H1 (cell line): ENCODE measurements at regions of chr10 and their contacts with region 1.

Region 1: DNA sequence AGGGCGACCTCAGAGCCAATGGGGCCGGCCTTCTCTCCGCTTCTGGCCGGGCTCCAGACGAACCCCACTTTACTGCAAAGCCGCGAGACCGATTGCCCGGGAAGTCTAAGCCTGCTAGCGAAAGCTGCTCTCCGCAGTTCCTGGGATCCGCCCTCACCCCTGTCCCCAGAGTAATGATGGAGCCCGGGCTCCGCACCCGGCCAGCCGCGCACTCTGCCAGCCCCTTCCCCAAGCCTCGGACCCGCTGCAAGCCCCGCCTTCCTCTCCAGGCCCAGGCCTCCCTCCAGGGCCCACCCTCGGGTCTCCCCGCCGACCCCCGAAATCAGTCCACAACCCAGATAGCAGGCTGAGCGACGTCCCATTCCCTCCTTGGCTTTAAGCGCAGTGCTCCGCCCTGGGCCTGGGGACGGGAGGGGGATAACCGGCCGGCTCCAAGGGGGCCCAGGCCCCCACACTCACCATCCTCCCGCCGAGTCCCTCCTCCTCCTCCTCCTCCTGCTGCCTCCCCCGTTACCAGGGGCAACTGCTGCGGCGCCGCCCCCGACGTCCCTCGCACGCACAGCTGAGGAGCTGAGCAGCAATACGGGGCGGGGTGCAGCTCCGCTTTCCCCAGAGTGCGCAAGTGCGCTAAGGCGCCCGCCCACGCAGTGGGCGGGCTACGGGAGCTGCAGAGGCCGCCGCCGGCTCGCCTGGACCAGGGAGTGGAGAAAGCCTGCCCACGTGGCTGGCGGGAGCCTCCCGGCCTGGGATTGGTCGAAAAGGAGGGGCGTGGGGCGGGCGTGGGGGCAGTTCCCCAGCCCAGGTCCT is at the start of gene ARL3:
- DNase-seq: peak; percentile 97
- H3K4me3 ChIP-seq: peak within 1 kb of the TSS; percentile 85 to 96 (median 92)
- H3K27ac ChIP-seq: peak within 1 kb of the TSS; percentile 89
- H3K4me1 ChIP-seq: peaks cover 5 to 22% (median 14%) of the 10 kb centered on the region in 4 experiments; a peak in 6 of 7 replicates
- H3K27me3 ChIP-seq: no peaks in the 10 kb centered on the region
- CTCF ChIP-seq: peak in 2 of 3 experiments; percentile 42 to 66; a peak in 3 of 4 replicates
- EP300 ChIP-seq: 0 out of 3 replicates have a peak, but pooled peaks of 1 of the 2 experiments have one; percentile 27
- POLR2A ChIP-seq: peak in 1 of 2 experiments; percentile 77; a peak in 2 of 3 replicates
- RAD21 ChIP-seq: no peak; a peak in 1 of 4 replicates
- total RNA-seq, gene ARL3: 15.3 and 16.2 TPM in 2 replicates

Region 2: GRCh38 chr10:102596506-102596971 is 117.5 kb before region 1 on chr10:
- CTCF ChIA-PET with region 1: no interaction called
- POLR2A ChIA-PET with region 1: no interaction called
- DNase-seq: peak in 1 of 2 experiments; percentile 65
- H3K4me3 ChIP-seq: no peak overlapping the region
- H3K27ac ChIP-seq: no peak overlapping the region
- H3K4me1 ChIP-seq: peaks cover 0 to 2% (median 0%) of the 10 kb centered on the region in 4 experiments; a peak in 3 of 7 replicates
- H3K27me3 ChIP-seq: no peaks in the 10 kb centered on the region; a peak in 1 of 7 replicates
- CTCF ChIP-seq: peak; percentile 81 to 97 (median 87)
- EP300 ChIP-seq: no peak
- POLR2A ChIP-seq: no peak
- RAD21 ChIP-seq: peak; percentile 77 to 85

Region 3: GRCh38 chr10:102641880-102642735 is 71.9 kb before region 1 on chr10:
- CTCF ChIA-PET with region 1: no interaction called
- POLR2A ChIA-PET with region 1: interaction called, 13 read pairs
- DNase-seq: peak; percentile 94
- H3K4me3 ChIP-seq: peak overlapping the region; percentile 40 to 81 (median 63)
- H3K27ac ChIP-seq: peak overlapping the region; percentile 80; the same call in 1 of the 2 replicates
- H3K4me1 ChIP-seq: peaks cover 6 to 16% (median 13%) of the 10 kb centered on the region in 4 experiments
- H3K27me3 ChIP-seq: no peaks in the 10 kb centered on the region
- CTCF ChIP-seq: no peak
- EP300 ChIP-seq: no peak
- POLR2A ChIP-seq: peak in 1 of 2 experiments; percentile 77; a peak in 2 of 3 replicates
- RAD21 ChIP-seq: no peak

Region 4: DNA sequence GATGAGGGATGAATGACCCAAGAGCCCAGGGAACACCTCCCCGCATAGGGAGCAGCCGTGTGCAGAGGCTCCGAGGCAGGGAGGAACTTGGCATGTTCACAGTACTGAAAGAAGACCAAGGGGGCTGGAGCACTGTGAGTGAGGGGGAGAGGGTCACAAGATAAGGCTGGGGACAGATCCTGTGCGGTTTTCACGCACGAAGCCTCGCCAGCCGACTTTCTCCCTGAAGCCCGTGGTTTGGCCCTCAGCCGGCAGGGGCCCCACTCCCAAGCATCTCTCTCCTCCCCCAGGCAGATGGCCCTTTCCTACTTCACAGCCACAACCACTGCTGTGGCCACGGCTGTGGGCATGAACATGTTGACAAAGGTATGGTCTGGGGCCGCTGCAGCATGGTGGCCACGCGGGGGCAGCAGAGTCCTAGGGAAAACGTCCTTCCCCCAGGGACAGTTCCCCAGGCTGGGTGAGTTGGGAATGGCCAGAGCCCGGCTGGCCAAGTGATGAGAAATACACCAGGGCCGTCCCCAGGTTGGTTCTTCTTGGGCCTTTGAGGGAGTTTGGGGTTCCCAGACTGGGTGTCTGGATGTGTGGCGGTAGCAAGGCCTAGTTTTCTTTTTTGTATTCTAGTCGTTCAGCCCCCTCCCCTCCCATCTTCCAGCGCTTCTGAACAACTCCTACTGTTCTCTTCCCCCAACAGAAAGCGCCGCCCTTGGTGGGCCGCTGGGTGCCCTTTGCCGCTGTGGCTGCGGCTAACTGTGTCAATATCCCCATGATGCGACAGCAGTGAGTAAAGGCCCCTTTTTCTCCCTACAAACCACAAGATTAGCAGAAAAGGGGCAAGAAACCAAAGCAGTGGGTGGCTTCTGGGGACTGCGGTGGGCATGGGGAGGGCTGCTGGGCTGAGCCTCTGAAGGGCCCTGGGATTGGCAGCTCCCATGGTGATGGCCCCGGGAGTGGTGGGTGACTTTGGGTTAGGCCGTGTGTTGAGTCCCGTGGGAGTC is 15.3 kb after region 1 on chr10:
- CTCF ChIA-PET with region 1: interaction called, 8 read pairs
- POLR2A ChIA-PET with region 1: interaction called, 53 read pairs
- DNase-seq: peak in 1 of 2 experiments; percentile 97
- H3K4me3 ChIP-seq: no peak overlapping the region
- H3K27ac ChIP-seq: 0 out of 2 replicates have a peak overlapping the region, but pooled peaks have one; percentile 1
- H3K4me1 ChIP-seq: no peaks in the 10 kb centered on the region
- H3K27me3 ChIP-seq: no peaks in the 10 kb centered on the region
- CTCF ChIP-seq: peak; percentile 90 to 97 (median 97)
- EP300 ChIP-seq: no peak
- POLR2A ChIP-seq: no peak
- RAD21 ChIP-seq: peak; percentile 94 to 98

Region 5: GRCh38 chr10:102738692-102739121 is 24.7 kb after region 1 on chr10:
- CTCF ChIA-PET with region 1: interaction called, 5 read pairs
- POLR2A ChIA-PET with region 1: interaction called, 21 read pairs
- DNase-seq: no peak
- H3K4me3 ChIP-seq: no peak overlapping the region
- H3K27ac ChIP-seq: no peak overlapping the region
- H3K4me1 ChIP-seq: peaks cover 0 to 6% (median 2%) of the 10 kb centered on the region in 4 experiments; a peak in 4 of 7 replicates
- H3K27me3 ChIP-seq: no peaks in the 10 kb centered on the region; a peak in 1 of 7 replicates
- CTCF ChIP-seq: no peak
- EP300 ChIP-seq: no peak
- POLR2A ChIP-seq: no peak
- RAD21 ChIP-seq: no peak

Region 6: DNA sequence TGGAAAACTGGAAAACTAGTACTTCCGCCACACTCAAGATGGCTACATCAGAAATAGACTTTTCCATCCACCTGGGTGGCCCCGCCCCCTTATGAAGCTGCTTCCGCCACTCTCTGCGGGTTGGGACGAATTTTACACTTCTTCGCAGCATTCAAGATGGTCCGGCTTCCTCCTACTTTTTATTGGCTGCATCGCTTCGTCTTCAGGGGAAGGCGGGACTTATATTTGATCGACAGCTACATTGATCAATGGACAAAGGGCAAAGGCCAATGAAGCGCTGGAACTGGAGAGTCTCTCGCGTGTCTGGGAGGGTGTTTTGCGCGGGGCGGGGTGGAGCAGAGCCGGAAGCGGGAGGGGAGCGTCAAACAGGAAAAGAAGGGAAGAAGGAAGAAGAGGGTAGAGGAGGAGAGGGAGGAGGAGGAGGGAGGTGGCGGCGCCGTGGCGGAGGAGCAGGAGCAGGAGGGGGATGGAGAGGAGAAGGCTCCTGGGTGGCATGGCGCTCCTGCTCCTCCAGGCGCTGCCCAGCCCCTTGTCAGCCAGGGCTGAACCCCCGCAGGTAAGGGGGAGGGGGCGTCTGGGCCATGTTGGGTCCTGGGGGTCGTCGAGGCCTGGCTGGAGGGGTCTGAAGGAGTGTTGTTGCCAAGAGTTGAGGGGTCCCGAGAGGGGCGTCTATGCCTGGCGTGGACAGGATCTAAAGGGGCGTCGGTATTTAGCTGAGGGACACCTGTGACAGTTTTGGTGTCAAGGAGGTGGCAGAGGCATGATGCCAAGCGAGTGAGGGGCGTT is 29.8 kb after region 1 on chr10 and contains the start of gene WBP1L:
- CTCF ChIA-PET with region 1: interaction called, 5 read pairs
- POLR2A ChIA-PET with region 1: interaction called, 21 read pairs
- DNase-seq: peak; percentile 91 to 96
- H3K4me3 ChIP-seq: peak within 1 kb of the TSS; percentile 76 to 92 (median 90)
- H3K27ac ChIP-seq: no peak within 1 kb of the TSS
- H3K4me1 ChIP-seq: peaks cover 0 to 6% (median 2%) of the 10 kb centered on the region in 4 experiments; a peak in 4 of 7 replicates
- H3K27me3 ChIP-seq: no peaks in the 10 kb centered on the region; a peak in 1 of 7 replicates
- CTCF ChIP-seq: no peak
- EP300 ChIP-seq: no peak
- POLR2A ChIP-seq: peak; percentile 40 to 50; a peak in 2 of 3 replicates
- RAD21 ChIP-seq: no peak
- total RNA-seq, gene WBP1L: 26.2 and 26.6 TPM in 2 replicates

Region 7: DNA sequence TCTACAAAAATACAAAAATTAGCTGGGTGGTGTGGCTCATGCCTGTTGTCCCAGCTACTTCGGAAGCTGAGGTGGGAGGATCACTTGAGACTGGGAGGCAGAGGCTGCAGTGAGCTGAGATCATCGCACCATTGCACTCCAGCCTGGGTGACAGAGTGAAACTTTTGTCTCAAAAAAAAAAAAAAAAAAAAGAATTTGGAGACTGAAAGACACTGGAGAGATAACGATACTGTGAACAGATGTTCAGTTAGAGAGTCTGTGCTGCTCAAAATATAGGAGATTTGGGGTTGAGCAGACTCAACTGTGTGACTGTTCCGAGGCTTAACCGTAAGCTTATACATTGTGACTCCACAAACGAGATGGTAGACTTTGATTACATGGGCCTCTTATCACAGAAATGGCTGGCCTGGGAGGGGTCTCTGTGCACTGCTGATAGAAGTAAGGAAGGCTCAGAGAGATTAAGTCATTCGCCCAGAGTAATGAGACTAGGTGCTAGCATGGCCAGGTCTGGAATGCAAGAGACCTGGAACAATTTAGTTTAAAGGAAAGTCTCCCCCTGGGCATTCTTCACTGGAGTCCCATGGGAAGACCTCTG is 49.1 kb after region 1 on chr10:
- CTCF ChIA-PET with region 1: no interaction called
- POLR2A ChIA-PET with region 1: no interaction called
- DNase-seq: no peak
- H3K4me3 ChIP-seq: no peak overlapping the region
- H3K27ac ChIP-seq: no peak overlapping the region
- H3K4me1 ChIP-seq: no peaks in the 10 kb centered on the region
- H3K27me3 ChIP-seq: no peaks in the 10 kb centered on the region
- CTCF ChIP-seq: no peak
- EP300 ChIP-seq: no peak
- POLR2A ChIP-seq: no peak
- RAD21 ChIP-seq: no peak